Lower lobe of right lung (tissue), 2 donors: ENCODE measurements at regions of chr9 and their contacts with region 1.

Region 1: DNA sequence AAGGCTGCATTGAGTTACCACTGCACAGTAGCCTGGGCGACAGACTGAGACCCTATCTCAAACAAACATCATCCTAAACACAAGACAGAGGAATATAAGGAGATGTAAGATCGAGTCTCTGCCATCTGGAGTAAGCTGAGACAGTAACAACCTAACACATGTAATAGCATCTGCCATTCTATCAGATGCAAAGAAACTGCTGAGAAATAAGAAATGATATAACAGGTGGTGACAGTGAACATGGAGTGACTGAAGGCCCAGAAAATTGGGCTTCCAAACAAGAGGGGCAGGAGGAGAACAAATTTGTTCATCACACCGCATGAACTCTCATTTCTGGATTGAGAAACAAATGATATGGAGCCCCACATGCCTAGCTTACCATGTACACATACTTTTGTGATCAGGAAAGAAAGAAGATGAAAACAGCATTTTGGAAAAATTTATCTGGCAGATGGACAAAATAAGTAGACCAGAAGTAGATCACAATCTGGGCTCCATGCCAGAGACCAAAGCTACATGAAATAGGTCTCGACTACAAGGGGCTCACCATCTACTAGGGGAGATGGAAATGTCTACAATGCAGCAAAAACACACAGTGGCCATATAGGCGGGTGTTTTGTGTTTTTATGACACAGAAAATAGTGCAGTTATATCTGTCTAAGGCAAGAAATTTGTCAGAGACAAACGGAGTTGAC is 45.5 kb downstream of the ECPAS start:
- DNase-seq: no peak
- ATAC-seq: no peak
- H3K4me3 ChIP-seq: no peak overlapping the region
- H3K27ac ChIP-seq: no peak overlapping the region
- H3K4me1 ChIP-seq: no peaks in the 10 kb centered on the region
- H3K27me3 ChIP-seq: no peaks in the 10 kb centered on the region
- CTCF ChIP-seq: no peak

Region 2: GRCh38 chr9:111362526-111362925 is 76.2 kb before region 1 on chr9:
- intact Hi-C with region 1: loop called (anchors 10 kb)
- DNase-seq: no peak
- ATAC-seq: no peak
- H3K4me3 ChIP-seq: no peak overlapping the region
- H3K27ac ChIP-seq: no peak overlapping the region
- H3K4me1 ChIP-seq: no peaks in the 10 kb centered on the region
- H3K27me3 ChIP-seq: no peaks in the 10 kb centered on the region
- CTCF ChIP-seq: no peak